ENCODE measurements at regions of chr6 and their contacts with region 1.

Region 1: DNA sequence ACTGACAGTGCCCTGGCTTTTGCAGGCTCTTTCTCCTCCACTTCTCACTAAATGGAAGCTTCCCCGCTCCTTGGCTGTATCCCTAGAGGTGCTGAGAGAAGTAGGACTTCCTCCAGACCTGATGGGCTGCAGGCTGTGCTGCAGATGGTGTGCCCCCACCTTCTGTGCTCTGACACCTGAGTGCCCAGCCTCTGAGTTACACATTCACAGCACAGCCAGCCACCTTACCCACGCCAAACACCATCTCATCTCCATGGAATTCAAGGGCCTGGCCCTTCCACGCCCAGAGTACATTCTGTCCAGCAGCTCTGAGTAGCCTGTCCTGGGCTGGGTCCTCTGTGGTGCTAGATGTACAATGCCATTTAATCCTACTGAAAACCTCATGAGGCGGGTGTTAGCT is 5.3 kb downstream of the SFTA2 start:
- DNase-seq: no peak
- ATAC-seq: peak in 7 of 8 donors; percentile 49 to 93 (median 65)
- H3K4me3 ChIP-seq: no peak overlapping the region
- H3K27ac ChIP-seq: no peak overlapping the region
- H3K4me1 ChIP-seq: peaks cover 0 to 16% (median 0%) of the 10 kb centered on the region in 9 donors
- H3K27me3 ChIP-seq: no peaks in the 10 kb centered on the region
- CTCF ChIP-seq: no peak

Region 2: DNA sequence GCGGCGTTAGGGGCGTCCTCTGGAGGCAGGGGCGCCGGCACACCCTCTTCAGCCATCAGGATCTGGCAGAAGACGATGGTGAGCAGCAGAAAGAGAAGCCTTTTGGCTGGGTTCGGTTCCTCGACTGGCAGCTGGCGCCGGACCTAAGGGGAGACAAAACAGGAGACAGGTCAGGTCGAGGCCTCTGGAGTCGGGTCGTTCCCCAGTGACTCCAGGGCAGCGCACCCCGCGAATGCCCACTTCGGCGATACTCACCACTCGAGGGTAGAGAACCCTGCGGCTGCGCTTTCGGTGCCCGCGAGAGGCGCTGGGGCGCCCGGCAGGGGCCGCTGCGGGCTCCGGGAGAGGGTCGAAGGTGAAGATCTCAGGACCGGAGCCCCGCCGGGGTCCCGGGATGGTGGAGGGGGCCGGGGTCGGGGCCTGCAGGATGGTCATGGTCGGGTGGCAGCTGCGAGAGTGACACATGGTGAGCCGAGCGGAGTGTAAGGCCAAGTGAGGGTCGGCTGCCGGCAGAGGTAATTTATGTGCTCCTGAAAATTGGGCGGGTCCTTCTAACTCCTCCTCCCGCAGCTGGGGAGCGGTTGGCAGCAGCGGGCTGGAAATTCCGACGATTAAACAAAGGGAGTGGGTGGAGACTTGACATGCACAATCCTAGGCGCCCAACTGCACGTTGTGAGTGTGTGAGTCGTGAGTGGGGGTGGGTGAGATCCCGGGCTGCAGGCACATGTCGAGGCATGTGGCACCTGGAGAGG is 182.4 kb before region 1 on chr6 and contains the start of gene IER3:
- intact Hi-C with region 1: no loop called
- DNase-seq: peak; percentile 79 to 92
- ATAC-seq: peak; percentile 49 to 75 (median 60)
- H3K4me3 ChIP-seq: peak within 1 kb of the TSS; percentile 63 to 95 (median 82)
- H3K27ac ChIP-seq: peak within 1 kb of the TSS; percentile 91 to 100 (median 96)
- H3K4me1 ChIP-seq: peaks cover 11 to 63% (median 52%) of the 10 kb centered on the region in 9 donors
- H3K27me3 ChIP-seq: no peaks in the 10 kb centered on the region
- CTCF ChIP-seq: peak; percentile 40 to 79 (median 66)
- total RNA-seq, gene IER3: 15.6 to 309 (median 115) TPM

Region 3: DNA sequence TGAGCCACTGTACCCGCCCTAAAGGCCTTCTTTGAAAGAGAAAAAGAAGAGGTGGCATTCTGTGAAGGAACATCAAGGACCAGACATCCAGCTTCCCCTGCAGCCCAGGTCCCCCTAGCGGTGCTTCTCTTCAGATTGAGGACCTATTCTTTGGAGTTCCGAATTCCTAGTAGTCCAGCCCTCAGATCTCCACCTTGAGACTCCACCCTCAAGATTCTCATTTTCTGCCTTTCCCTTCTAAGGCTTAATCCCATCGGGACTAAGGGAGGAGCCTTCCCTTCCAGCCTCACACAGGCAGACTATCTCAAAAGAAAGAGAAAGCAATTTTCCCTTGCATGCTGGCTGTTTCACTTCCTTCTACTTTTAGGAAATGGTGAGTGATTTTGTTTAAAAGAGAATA is 116.2 kb after region 1 on chr6:
- intact Hi-C with region 1: loop called in 2 of 10 experiments (anchors 5 to 10 kb)
- DNase-seq: peak; percentile 23 to 45
- ATAC-seq: peak in 7 of 8 donors; percentile 42 to 71 (median 61)
- H3K4me3 ChIP-seq: peak overlapping the region in 1 of 10 donors; percentile 5
- H3K27ac ChIP-seq: peak overlapping the region in 2 of 10 donors; percentile 10 to 21
- H3K4me1 ChIP-seq: peaks cover 0 to 9% (median 0%) of the 10 kb centered on the region in 9 donors
- H3K27me3 ChIP-seq: peaks cover 0 to 21% (median 9%) of the 10 kb centered on the region in 7 donors
- CTCF ChIP-seq: peak; percentile 31 to 63 (median 50)

Region 4: DNA sequence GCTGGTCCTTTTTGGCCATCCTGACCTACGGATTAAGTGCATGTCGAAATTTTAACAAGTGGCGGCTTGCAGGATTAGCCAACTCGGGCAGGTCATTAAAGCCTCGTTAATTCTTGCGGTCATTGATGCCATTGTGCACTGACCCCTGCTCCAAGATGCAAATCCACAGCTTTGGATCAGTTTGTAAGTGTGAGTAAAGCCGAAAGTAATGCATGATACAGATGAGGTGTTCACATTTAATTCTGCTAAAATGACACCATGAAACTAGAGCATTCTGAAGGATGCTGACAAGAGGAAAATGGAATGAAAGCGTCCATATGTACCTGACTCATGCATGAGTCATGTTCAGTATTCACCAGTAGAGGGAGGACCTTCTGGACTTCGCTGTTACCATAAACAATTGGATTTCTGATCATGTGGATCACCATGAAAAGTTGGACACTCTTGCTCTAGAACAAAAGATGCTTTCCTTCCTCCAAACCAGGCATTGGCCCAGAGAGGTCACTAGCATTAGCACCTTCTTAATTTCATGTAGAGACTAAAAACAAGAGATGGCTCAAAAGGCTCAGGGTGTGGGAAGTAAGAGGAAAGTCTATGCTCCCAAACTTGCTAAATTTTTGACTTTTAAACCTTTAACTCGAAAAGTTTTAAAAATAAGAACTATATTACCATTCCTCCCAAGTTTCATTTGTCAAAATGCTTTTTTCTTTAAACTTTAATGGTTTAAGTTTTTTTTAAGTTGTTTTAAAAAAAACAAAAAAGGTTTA is 131.7 kb after region 1 on chr6:
- intact Hi-C with region 1: loop called in 2 of 10 experiments (anchors 5 kb)
- DNase-seq: no peak
- ATAC-seq: peak in 1 of 8 donors; percentile 41
- H3K4me3 ChIP-seq: no peak overlapping the region
- H3K27ac ChIP-seq: no peak overlapping the region
- H3K4me1 ChIP-seq: peaks cover 0 to 3% (median 0%) of the 10 kb centered on the region in 9 donors
- H3K27me3 ChIP-seq: peaks cover 0 to 13% (median 3%) of the 10 kb centered on the region in 7 donors
- CTCF ChIP-seq: peak; percentile 24 to 63 (median 46)

Region 5: DNA sequence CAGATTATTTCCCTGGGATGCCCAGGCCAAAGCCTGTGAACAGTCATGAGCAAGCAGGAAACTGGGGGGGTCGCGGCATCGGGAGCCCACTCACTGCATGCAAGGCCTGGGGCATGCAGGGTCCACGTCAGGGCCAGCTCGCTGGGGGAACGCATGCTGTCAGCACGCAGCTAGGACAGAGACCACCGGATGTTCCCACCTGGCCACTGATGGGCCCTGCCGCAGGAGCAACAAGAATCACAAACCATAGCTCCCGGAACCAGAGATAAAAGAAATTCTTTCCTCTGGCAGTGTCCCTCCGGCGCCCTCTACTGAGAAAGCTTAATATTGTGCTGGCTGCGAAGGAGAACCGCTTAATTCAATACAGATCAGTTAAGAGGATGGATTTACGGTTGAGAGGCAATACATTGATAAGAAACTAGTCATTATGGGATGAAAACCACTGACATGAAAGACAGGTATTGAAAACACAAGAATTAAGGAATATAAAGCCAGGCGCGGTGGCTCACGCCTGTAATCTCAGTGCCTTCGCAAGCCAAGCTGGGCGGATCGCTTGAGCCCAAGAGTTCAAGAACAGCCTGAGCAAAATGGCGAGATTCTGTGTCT is 153.1 kb after region 1 on chr6:
- intact Hi-C with region 1: loop called in 1 of 10 experiments (anchors 5 kb)
- DNase-seq: peak; percentile 40 to 63
- ATAC-seq: peak in 7 of 8 donors; percentile 63 to 83 (median 67)
- H3K4me3 ChIP-seq: peak overlapping the region in 6 of 10 donors; percentile 1 to 37 (median 34)
- H3K27ac ChIP-seq: no peak overlapping the region
- H3K4me1 ChIP-seq: peaks cover 0 to 12% (median 4%) of the 10 kb centered on the region in 9 donors
- H3K27me3 ChIP-seq: no peaks in the 10 kb centered on the region
- CTCF ChIP-seq: peak; percentile 56 to 90 (median 78)

Measured in heart right ventricle (tissue), 16 donors.